K562 (cell line): ENCODE measurements at regions of chr19 and their contacts with region 1.

Region 1: DNA sequence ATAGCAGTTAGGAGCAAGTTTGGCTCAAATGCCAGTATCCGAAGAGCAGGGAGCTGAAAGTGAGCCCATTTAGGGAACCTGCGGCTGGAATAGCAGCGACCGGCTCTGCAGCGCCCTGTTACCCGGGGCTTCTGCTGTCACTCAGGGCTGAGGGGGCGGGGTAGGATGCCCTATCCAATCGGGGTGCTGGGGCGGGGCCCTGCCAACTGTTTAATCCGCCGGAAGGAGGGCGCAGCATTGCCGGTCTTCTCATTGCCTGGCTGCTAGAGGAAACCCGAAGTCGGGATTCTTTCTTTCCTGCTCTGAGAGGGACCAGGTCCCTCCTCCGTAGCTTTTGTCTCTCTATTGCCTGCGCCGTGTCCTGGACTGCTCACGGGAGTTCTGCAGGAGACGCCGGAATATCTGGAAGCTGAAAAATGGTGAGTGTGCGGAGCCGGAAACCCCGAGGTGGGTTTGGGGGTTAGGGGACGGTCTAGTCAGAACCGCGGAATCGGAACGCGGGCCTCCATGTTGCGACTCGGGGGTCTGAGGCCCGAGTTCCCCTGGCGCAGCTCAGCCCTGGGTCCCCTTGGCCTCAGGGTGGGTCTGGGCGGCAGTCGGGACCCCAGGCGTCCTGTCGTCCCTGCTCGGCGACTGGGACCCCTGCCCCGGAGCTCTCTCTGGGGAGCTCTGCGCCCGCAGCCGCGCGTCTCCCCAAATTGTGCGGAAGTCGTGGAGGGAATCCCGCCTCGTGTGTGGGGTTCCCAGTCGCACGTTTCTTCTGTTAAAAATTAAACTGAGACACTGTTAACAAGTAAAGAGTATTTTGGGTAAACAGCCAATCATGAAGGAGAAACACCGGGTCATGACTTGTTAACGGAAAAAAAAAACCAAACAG is 22.8 kb downstream of the ZNF763 start:
- DNase-seq: peak; percentile 79 to 85 (median 82)
- ATAC-seq: peak; percentile 98
- H3K4me3 ChIP-seq: peak overlapping the region; percentile 54
- H3K27ac ChIP-seq: peak overlapping the region; percentile 77
- H3K4me1 ChIP-seq: peaks cover 0 to 3% of the 10 kb centered on the region in 2 experiments; a peak in 2 of 5 replicates
- H3K27me3 ChIP-seq: no peaks in the 10 kb centered on the region
- CTCF ChIP-seq: no peak
- EP300 ChIP-seq: no peak
- POLR2A ChIP-seq: peak; percentile 76
- RAD21 ChIP-seq: no peak

Region 2: DNA sequence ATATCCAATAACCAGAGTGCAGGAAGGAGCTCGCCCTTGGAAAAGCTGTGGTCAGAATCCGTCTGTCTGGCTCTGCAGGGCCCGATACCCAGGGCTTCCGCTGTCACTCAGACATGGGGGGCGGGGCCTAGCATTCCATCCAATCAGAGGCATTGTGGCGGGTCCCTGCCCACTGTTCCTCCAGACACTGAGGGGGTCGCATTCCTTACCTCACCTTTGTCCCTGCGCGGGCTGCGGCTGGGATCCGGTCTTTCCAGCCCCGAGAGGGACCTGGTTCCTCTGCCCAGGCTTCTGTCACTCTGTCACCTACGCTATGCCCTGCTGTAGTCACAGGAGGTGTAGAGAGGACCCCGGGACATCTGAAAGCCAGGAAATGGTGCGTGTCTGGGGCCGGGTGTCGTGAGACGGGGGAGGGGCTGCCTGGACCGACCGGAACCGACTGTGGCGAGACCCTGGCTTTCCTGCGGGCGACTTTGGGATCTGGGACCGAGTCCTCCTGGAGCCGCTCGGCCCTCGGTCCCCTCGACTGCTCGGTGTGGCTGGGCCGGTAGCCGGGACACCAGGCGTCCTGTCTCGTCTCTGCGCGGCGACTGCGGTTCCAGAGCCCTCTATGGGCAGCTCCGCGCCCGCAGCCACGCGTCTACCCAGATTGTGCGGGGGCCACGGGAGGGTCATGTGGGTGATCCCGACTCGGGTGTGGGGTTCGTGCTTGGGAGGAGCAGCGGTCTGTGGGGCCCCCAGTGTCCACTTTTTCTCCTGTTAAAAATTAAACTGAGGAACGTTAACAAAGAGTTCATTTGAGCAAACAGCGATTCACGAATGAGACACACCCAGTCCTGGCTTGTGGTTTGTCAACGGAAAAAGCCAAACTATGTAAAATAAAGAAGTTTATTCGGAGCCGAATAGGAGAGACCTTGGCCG is 99.8 kb before region 1 on chr19 and contains the start of gene ZNF69:
- CTCF ChIA-PET with region 1: no interaction called
- POLR2A ChIA-PET with region 1: no interaction called
- in situ Hi-C with region 1: loop called (anchors 5 kb)
- intact Hi-C with region 1: no loop called
- DNase-seq: peak; percentile 84 to 90 (median 88)
- ATAC-seq: peak; percentile 97
- H3K4me3 ChIP-seq: peak within 1 kb of the TSS; percentile 59
- H3K27ac ChIP-seq: peak within 1 kb of the TSS; percentile 63
- H3K4me1 ChIP-seq: peaks cover 9 to 21% of the 10 kb centered on the region in 2 experiments; a peak in 4 of 5 replicates
- H3K27me3 ChIP-seq: no peaks in the 10 kb centered on the region
- CTCF ChIP-seq: peak in 2 of 3 experiments; percentile 42 to 48; a peak in 4 of 6 replicates
- EP300 ChIP-seq: no peak
- POLR2A ChIP-seq: peak; percentile 72
- RAD21 ChIP-seq: peak in 1 of 2 experiments; percentile 23; a peak in 1 of 4 replicates
- polyA plus RNA-seq, gene ZNF69: 3.5 to 4.8 TPM

Region 3: DNA sequence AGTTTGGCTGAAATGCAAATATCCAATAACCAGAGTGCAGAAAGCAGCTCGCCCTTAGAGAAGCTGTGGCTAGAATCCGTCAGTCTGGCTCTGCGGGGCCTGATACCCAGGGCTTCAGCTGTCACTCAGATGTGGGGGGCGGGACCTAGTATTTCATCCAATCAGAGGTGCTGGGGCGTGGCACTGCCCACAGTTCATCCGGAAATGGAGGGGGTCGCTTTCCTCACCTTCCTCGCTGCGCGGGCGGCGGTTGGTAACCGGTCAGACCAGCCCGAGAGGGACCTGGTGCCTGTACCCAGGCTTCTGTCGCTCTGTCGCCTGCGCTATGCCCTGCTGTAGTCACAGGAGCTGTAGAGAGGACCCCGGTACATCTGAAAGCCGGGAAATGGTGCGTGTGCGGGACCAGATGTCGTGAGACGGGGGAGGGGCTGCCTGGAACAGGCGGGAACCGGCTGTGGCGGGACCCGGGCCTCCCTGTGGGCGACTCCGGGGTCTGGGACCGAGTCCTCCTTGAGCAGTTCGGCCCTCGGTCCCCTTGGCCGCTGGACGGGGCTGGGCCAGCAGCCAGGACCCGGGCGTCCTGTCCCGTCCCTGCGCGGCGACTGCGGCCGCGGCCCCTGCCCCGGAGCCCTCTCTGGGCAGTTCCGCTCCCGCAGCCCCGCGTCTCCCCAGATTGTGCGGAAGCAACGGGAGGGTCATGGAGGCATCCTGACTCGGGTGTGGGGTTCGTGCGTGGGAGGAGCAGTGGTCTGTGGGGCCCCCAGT is 62.6 kb before region 1 on chr19 and contains the start of gene ZNF700:
- CTCF ChIA-PET with region 1: interaction called, 4 read pairs
- POLR2A ChIA-PET with region 1: interaction called, 3 read pairs
- in situ Hi-C with region 1: no loop called
- intact Hi-C with region 1: loop called (anchors 1 kb)
- DNase-seq: peak; percentile 94 to 97 (median 94)
- ATAC-seq: peak; percentile 96
- H3K4me3 ChIP-seq: peak within 1 kb of the TSS; percentile 83
- H3K27ac ChIP-seq: peak within 1 kb of the TSS; percentile 94
- H3K4me1 ChIP-seq: peaks cover 12 to 26% of the 10 kb centered on the region in 2 experiments; a peak in 4 of 5 replicates
- H3K27me3 ChIP-seq: no peaks in the 10 kb centered on the region
- CTCF ChIP-seq: no peak
- EP300 ChIP-seq: peak; percentile 5; the same call in 1 of the 2 replicates
- POLR2A ChIP-seq: peak; percentile 97
- RAD21 ChIP-seq: no peak
- polyA plus RNA-seq, gene ZNF700: 11.5 to 13.3 TPM